PC-9 (cell line): ENCODE measurements at regions of chr11 and their contacts with region 1.

Region 1: GRCh38 chr11:75351791-75352587 is 528 bp upstream of the ARRB1 start:
- DNase-seq: no peak
- H3K4me3 ChIP-seq: peak overlapping the region; percentile 87
- H3K27ac ChIP-seq: no peak overlapping the region
- H3K4me1 ChIP-seq: peaks cover 59% of the 10 kb centered on the region
- H3K27me3 ChIP-seq: no peaks in the 10 kb centered on the region
- CTCF ChIP-seq: no peak; the same call in 1 of the 2 replicates

Region 2: DNA sequence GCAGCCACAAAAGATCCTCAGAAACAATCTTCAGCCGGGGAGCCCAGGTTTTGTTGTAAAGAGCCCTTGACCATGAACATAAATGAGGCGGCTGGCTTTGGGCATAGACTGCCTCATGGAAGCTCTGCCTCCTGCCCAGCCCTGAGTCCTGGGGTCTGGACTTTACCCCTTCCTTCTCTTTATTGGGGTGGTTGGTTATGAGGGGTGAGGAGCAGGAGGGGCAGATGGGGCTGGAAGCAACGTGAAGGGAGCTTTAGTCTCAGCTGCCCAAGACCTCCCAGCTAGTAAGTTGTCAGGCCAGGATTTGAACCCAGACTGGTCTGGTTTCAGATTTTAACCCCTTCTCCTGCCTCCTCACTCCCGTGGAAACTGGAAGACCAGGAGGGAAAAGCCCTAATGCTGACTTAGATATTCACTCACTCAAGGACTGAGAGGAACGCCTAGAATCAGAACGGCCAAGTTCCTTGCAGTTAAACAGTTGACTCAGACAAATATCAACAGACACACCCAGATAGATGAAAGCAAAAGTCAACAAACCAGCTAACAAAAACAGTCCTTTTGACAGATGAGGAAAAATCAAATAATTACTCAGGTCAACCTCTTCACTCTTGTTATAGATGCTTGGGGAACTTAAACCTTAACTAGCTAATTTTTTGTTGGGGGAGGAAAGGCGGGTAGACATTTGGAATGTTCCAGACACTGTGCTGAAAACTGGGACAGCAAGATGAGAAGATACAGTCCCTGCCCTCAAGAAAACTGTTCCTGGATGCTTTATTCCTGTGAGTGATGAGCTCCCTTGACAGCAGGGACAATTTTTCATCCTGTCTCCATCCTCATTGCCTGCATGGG is 20.2 kb after region 1 on chr11:
- CTCF ChIA-PET with region 1: interaction called, 11 read pairs
- POLR2A ChIA-PET with region 1: interaction called, 5 read pairs
- intact Hi-C with region 1: no loop called
- DNase-seq: peak; percentile 32 to 95
- H3K4me3 ChIP-seq: no peak overlapping the region
- H3K27ac ChIP-seq: peak overlapping the region; percentile 32
- H3K4me1 ChIP-seq: peaks cover 36% of the 10 kb centered on the region
- H3K27me3 ChIP-seq: no peaks in the 10 kb centered on the region
- CTCF ChIP-seq: no peak

Region 3: DNA sequence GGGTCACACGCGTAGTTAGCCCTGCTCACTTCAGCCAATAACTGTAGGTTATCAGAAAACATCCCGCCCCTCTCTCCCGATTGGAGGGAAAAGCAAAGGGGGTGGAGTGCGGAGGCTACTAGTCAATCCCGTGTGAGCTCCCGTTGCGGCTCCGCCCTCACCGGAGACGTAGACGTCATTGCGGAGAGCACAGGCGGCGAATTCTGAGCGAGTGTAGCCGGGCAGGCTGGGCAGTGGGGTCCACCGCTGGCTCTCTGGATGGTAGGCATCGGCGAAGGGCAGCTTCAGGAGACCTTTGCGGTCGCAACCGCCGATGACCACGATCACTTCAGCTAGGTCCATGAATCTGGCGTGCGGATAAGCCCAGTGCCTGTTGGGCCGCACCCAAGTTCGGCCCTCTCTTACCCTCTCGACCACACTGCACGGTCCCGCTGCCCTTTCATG is 76.3 kb after region 1 on chr11:
- CTCF ChIA-PET with region 1: no interaction called
- POLR2A ChIA-PET with region 1: interaction called, 14 read pairs
- intact Hi-C with region 1: no loop called
- DNase-seq: peak; percentile 95
- H3K4me3 ChIP-seq: peak overlapping the region; percentile 52
- H3K27ac ChIP-seq: no peak overlapping the region
- H3K4me1 ChIP-seq: peaks cover 21% of the 10 kb centered on the region
- H3K27me3 ChIP-seq: no peaks in the 10 kb centered on the region
- CTCF ChIP-seq: no peak